H1 (cell line): ENCODE measurements at regions of chr10 and their contacts with region 1.

Region 1: DNA sequence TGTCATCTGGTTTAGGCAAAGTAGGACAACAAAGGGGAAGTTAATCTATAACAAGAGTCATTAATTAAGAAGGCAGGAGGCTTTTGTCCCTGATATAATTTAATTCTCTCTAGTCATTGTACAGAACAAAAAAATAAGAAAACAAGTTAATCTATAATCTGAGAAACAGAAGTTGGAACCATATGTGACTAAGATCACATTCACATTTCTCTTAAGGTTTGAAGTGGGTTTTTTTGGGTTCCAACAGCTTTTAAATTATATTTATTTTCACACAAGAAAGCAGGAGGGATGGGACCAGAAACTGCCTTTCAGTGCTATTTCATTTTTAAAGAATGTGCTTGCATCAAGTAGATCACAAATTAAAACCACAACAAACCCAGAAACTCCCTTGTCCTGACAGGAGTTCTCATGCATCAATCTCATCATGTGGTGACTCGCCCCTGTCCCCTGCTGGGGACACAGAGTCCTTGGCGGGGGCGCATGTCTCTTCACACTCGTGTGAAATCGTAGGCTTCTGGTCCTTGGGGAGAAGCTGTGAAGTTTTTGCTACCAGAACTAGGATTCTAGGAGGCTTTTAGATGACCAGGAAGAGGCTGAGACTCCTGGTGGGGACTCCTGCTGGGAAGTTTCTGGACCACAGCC is 10.1 kb upstream of the OPN4 start:
- DNase-seq: peak in 1 of 2 experiments; percentile 50
- H3K4me3 ChIP-seq: no peak overlapping the region
- H3K27ac ChIP-seq: no peak overlapping the region
- H3K4me1 ChIP-seq: no peaks in the 10 kb centered on the region
- H3K27me3 ChIP-seq: no peaks in the 10 kb centered on the region
- CTCF ChIP-seq: peak; percentile 54 to 67 (median 65)
- EP300 ChIP-seq: no peak
- POLR2A ChIP-seq: no peak
- RAD21 ChIP-seq: peak; percentile 47 to 64

Region 2: DNA sequence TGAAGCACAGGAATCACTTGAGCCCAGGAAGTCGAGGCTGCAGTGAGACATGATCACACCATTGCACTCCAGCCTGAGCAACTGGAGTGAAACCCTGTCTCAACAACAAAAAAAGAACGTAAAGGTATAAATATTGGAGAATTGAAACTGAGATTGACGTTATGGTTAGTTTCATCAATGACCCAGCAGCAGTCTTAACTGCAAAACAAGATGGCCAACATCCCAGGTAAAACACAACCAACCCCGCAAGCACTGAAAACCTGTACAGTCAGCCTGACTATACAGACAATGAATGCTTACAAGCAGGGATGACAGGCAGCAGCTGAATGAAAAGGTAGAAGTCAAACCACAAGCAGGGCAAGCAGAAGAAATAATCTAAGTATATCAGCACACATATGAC is 157.4 kb before region 1 on chr10:
- CTCF ChIA-PET with region 1: no interaction called
- POLR2A ChIA-PET with region 1: no interaction called
- DNase-seq: no peak
- H3K4me3 ChIP-seq: no peak overlapping the region
- H3K27ac ChIP-seq: no peak overlapping the region
- H3K4me1 ChIP-seq: no peaks in the 10 kb centered on the region
- H3K27me3 ChIP-seq: no peaks in the 10 kb centered on the region
- CTCF ChIP-seq: no peak
- EP300 ChIP-seq: no peak
- POLR2A ChIP-seq: no peak
- RAD21 ChIP-seq: no peak

Region 3: DNA sequence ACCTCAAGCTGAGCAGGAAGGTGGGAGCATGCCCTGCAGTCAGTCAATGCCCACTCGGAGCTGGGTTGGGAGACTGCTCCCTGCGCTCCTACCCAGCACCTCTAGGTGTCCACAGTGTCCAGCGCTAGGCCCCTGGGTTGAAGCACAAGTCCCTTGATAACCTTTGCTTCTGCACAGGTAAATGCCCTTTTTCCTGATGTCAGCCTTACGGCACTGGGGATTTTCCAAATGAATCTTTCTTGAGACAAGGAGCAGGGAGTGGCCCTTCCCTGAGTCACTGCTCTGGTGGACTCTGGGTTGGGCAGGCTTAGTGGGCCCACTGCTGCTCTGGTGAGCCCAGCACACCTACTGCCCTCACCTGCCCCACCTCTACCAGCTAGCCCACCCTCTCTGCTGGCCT is 51.9 kb before region 1 on chr10:
- CTCF ChIA-PET with region 1: interaction called, 10 read pairs
- POLR2A ChIA-PET with region 1: no interaction called
- DNase-seq: no peak
- H3K4me3 ChIP-seq: no peak overlapping the region
- H3K27ac ChIP-seq: no peak overlapping the region
- H3K4me1 ChIP-seq: no peaks in the 10 kb centered on the region
- H3K27me3 ChIP-seq: no peaks in the 10 kb centered on the region
- CTCF ChIP-seq: peak; percentile 45 to 64 (median 53)
- EP300 ChIP-seq: no peak
- POLR2A ChIP-seq: no peak
- RAD21 ChIP-seq: peak; percentile 63 to 72

Region 4: DNA sequence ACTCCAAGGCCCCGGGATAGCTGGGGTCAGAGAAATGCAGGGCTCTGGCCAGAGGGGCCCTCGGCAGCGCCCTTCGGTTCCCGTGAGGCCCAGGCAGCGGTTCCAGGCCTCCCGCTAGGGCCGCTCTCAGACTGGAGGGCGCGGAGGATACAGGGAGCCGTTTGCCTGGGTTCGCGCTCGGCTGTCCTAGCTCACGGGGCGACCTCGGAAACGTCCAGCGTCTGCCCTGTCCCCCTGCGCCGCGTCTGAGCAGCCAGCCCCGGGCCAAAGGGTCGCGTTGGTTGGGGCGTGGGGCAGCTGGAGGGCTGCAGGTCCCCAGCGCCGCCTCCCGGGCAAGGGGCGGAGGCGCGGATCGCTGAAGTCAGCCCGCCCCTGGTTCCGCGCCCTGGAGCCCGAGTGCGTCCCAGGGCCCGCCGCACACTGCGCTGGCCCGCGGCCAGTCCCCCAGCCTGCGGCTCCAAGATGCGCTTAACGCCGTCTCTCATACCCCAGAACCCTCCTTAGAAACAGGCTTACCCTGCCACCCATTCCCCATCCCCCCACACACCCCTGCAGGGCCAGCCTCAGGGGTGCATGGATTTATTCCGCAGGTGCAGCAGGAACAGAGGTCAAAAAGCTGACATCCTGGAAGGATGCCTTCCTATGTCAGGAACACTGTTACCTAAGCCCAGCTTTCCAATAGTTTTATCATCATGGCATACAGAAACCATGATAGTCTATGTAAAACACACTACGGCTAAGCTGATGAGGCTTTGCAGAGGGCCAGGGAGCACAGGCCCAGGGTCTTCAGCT is 12.1 kb before region 1 on chr10:
- CTCF ChIA-PET with region 1: interaction called, 57 read pairs
- POLR2A ChIA-PET with region 1: no interaction called
- DNase-seq: peak; percentile 29 to 87
- H3K4me3 ChIP-seq: peak overlapping the region; percentile 31 to 61 (median 46)
- H3K27ac ChIP-seq: no peak overlapping the region
- H3K4me1 ChIP-seq: peaks cover 0 to 9% (median 3%) of the 10 kb centered on the region in 4 experiments; a peak in 5 of 7 replicates
- H3K27me3 ChIP-seq: peaks cover 0 to 23% (median 12%) of the 10 kb centered on the region in 4 experiments; a peak in 5 of 7 replicates
- CTCF ChIP-seq: peak; percentile 59 to 79 (median 69)
- EP300 ChIP-seq: no peak
- POLR2A ChIP-seq: 0 out of 3 replicates have a peak, but pooled peaks of 1 of the 2 experiments have one; percentile 45
- RAD21 ChIP-seq: peak; percentile 63 to 76

Region 5: GRCh38 chr10:86661161-86662025 is 17.1 kb after region 1 on chr10:
- CTCF ChIA-PET with region 1: interaction called, 17 read pairs
- POLR2A ChIA-PET with region 1: no interaction called
- DNase-seq: no peak
- H3K4me3 ChIP-seq: no peak overlapping the region
- H3K27ac ChIP-seq: no peak overlapping the region
- H3K4me1 ChIP-seq: peaks cover 0 to 5% (median 0%) of the 10 kb centered on the region in 4 experiments; a peak in 2 of 7 replicates
- H3K27me3 ChIP-seq: no peaks in the 10 kb centered on the region
- CTCF ChIP-seq: no peak
- EP300 ChIP-seq: no peak
- POLR2A ChIP-seq: no peak
- RAD21 ChIP-seq: no peak